ENCODE measurements at regions of chr19 and their contacts with region 1.

Region 1: DNA sequence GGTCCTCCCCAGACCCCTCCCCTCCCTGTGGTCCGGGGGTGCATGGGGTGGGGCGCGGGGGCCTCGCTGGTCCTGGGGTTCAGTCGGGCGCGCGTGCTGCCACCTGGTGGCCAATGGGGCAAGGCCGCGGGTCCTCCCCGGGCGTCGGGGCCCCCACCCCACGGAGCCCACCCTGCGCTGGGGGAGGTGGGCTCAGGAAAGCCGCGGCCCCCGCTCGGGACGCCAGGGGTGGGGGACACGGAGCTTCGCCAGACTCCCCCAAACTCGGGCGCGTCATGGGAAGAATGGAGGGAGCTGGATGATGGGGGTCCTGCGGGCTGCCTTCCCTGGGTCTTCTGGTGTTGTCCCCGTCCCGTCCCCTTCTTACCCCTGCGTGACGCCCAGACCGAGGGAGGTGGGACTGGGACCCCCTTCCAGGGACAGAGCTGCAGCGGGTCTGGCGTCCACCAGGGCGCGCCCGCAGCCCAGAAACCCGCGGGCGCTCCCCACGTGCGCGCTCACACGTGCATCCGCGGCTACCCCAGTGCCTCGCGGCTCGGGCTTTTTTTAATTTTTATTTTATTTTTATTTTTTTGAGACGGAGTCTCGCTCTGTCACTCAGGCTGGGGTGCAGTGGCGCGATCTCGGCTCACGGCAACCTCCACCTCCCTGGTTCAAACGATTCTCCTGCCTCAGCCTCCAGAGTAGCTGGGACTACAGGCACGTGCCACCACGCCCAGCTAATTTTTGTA is 19.8 kb upstream of the TCF3 start:
- DNase-seq: no peak
- H3K4me3 ChIP-seq: peak overlapping the region; percentile 36
- H3K27me3 ChIP-seq: peaks cover 24% of the 10 kb centered on the region
- CTCF ChIP-seq: peak; percentile 84

Region 2: GRCh38 chr19:1304197-1304924 is 367.8 kb before region 1 on chr19:
- CTCF ChIA-PET with region 1: no interaction called
- POLR2A ChIA-PET with region 1: no interaction called
- DNase-seq: no peak
- H3K4me3 ChIP-seq: no peak overlapping the region
- H3K27me3 ChIP-seq: no peaks in the 10 kb centered on the region
- CTCF ChIP-seq: no peak

Region 3: GRCh38 chr19:1605236-1606137 is 66.7 kb before region 1 on chr19 and contains the start of gene UQCR11:
- CTCF ChIA-PET with region 1: interaction called, 18 read pairs
- POLR2A ChIA-PET with region 1: no interaction called
- DNase-seq: peak; percentile 81
- H3K4me3 ChIP-seq: peak within 1 kb of the TSS; percentile 99
- H3K27me3 ChIP-seq: no peaks in the 10 kb centered on the region
- CTCF ChIP-seq: peak; percentile 74
- polyA plus RNA-seq, gene UQCR11: 177 and 213 TPM in 2 replicates

Region 4: GRCh38 chr19:1690699-1691307 is 18.6 kb after region 1 on chr19:
- CTCF ChIA-PET with region 1: interaction called, 20 read pairs
- POLR2A ChIA-PET with region 1: no interaction called
- DNase-seq: no peak
- H3K4me3 ChIP-seq: no peak overlapping the region
- H3K27me3 ChIP-seq: peaks cover 8% of the 10 kb centered on the region
- CTCF ChIP-seq: no peak

Region 5: DNA sequence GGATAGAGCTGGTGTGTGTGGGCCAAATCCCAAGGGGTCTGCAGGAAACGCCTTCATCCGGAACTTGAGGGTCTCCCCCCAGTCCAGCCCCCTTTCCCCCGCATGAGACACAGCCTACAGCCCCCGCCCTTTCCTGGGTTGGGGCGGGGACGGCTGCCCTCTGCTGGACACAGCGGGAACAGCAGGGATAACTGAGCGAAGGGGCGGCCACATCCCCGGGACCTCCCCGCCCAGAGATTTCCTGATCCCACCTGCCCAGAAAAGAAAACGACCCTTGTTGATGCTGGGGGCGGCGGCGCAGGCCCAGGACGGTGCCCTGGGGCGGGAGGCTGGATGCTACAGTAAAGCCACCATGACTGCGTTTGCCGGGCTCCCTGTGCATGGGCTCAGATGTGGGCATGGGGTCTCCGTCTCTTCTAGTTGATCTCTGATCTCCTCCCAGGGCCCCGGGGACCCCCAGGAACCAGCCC is 95.3 kb after region 1 on chr19:
- CTCF ChIA-PET with region 1: interaction called, 87 read pairs
- POLR2A ChIA-PET with region 1: no interaction called
- DNase-seq: no peak
- H3K4me3 ChIP-seq: no peak overlapping the region
- H3K27me3 ChIP-seq: peaks cover 37% of the 10 kb centered on the region
- CTCF ChIP-seq: peak; percentile 98

Region 6: GRCh38 chr19:1789261-1790041 is 117.2 kb after region 1 on chr19:
- CTCF ChIA-PET with region 1: interaction called, 81 read pairs
- POLR2A ChIA-PET with region 1: interaction called, 3 read pairs
- DNase-seq: no peak
- H3K4me3 ChIP-seq: no peak overlapping the region
- H3K27me3 ChIP-seq: no peaks in the 10 kb centered on the region; the same call in none of the 2 replicates
- CTCF ChIP-seq: no peak

Region 7: DNA sequence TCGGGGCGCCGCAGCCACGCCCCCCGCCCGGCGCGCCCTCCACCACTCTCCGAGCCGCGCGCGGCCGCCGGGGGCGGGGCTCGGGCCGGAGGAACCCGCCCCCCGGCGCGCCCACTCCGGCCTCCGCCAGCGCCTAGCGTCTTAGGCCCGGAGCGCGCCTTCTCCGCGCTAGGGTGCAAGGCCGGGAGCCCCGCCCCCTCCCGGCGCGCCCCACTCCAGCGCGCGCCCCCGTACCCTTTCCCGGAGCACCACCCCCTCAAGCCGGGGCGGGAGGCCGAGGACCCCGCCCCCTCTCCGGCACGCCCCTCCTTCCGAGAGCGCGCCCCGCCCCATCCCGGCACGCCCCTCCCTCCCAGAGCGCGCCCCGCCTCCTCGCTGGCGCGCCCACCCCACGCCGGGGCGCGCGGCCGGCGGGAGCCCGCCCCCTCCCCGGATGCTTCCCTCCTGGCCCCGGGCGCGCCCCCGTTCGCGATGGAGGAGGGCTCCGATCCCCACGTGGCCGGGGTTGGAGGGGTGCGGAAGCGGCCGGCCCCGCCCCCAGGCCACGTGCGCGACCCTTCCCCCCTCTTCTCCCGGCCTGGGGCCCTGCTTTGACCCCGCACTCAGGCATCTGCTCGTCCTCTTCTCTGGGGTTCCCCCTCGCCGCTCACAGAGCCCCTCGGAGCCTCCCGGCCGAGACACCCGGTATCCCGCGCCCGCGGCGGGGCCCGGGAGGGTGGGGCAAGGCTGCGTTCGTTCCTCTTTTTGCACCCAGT is 191.7 kb after region 1 on chr19:
- CTCF ChIA-PET with region 1: no interaction called
- POLR2A ChIA-PET with region 1: no interaction called
- DNase-seq: peak; percentile 30
- H3K4me3 ChIP-seq: peak overlapping the region; percentile 86
- H3K27me3 ChIP-seq: no peaks in the 10 kb centered on the region
- CTCF ChIP-seq: no peak